Activated CD4-positive, alpha-beta T cell treated with anti-CD3 and anti-CD28 coated beads for 36 hours (primary cell): ENCODE measurements at regions of chr11 and their contacts with region 1.

Region 1: DNA sequence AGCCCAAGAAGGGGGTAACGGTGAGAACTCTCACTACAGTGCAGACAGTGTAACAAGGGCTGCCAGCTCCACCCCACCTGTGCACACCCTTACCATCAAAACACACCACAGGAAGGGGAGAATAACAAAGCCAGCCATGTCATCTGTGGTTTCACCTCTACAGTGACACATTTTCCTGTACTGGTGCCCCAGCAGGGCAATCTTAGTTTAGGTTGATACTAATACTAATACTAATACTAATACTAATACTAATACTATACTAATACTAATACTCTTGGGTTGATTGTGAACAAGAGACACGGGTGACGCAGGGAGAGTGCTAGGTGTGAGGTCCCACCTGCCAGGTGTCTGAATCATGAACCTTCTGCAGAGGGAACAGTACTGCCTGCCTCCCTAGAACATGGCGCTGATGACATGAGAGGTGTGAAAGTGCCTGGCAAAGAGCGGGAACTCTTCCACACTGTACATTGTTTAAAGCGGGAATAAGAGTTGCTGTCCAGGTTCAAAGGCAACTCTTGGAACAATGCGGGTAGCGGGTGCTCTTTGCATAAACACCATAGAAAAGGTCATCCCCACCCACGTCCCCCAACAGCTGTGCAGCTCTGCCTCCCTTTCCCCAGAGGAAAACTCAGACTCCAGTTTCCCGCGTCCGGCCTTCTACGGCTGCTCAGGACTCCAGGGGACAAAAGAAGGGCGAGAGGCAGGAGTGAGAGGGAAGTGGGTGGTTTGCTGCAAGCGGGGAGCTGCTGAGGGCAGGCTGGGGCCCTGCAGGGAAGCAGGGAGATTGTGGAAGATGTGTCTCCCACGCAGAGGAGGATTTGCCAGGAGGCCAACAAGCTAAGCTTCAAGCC is 25.0 kb upstream of the TMPRSS4 start:
- DNase-seq: peak; percentile 77
- ATAC-seq: peak; percentile 82
- H3K4me3 Mint-ChIP-seq: peak overlapping the region; percentile 46
- H3K27ac Mint-ChIP-seq: peak overlapping the region; percentile 89
- H3K4me1 Mint-ChIP-seq: peaks cover 60% of the 10 kb centered on the region
- H3K27me3 Mint-ChIP-seq: peaks cover under 1% of the 10 kb centered on the region

Region 2: GRCh38 chr11:117426269-117426685 is 625.6 kb before region 1 on chr11:
- CTCF ChIA-PET with region 1: interaction called, 5 read pairs
- POLR2A ChIA-PET with region 1: no interaction called
- intact Hi-C with region 1: loop called in 1 of 2 experiments (anchors 5 kb)
- DNase-seq: peak; percentile 86
- ATAC-seq: peak; percentile 78
- H3K4me3 Mint-ChIP-seq: no peak overlapping the region
- H3K27ac Mint-ChIP-seq: no peak overlapping the region
- H3K4me1 Mint-ChIP-seq: peaks cover 7% of the 10 kb centered on the region
- H3K27me3 Mint-ChIP-seq: no peaks in the 10 kb centered on the region

Region 3: GRCh38 chr11:117817368-117818040 is 234.3 kb before region 1 on chr11:
- CTCF ChIA-PET with region 1: interaction called, 48 read pairs
- POLR2A ChIA-PET with region 1: interaction called, 3 read pairs
- intact Hi-C with region 1: loop called (anchors 1 to 2 kb)
- DNase-seq: peak; percentile 95
- ATAC-seq: peak; percentile 45
- H3K4me3 Mint-ChIP-seq: peak overlapping the region; percentile 49
- H3K27ac Mint-ChIP-seq: peak overlapping the region; percentile 99
- H3K4me1 Mint-ChIP-seq: peaks cover 59% of the 10 kb centered on the region
- H3K27me3 Mint-ChIP-seq: no peaks in the 10 kb centered on the region

Region 4: DNA sequence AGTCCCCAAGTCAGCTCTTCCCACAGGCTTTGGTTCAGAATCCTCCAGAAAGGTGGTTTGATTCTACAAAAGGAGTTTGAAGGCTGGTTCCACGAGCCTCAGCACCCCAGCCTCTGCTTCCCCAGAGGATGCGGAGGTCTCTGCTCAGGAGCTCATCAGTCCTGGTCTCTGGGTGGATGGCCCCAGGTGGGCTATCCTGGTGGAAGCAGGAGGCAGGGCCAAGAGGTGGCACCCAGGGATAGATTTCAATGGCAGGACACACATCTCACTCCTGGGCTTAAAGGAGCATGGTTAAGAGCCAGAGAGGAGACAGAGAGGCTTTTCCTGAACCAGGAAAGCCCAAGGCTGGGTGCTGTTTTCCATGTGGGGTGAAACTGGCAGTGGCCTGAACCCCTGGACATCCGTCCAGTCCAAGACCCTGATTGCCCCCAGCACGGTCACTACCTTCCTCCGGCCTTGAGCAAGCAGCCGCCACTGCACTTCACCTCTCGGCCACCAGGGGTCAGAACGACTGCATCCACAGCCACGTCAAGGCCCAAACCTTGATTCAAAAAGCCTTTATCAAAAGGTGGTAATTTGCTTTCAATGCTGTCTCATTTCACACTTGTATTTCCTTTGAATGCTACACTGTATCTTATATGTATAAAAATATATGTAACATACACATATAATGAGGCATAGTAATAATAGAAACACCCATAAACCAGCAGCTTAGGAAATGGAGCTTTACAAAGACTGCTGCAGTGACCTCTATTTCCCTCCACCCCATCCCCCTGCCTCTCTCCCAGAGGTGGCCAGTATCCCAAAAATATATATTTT is 208.0 kb before region 1 on chr11:
- CTCF ChIA-PET with region 1: interaction called, 94 read pairs
- POLR2A ChIA-PET with region 1: no interaction called
- intact Hi-C with region 1: loop called (anchors 1 kb)
- DNase-seq: peak; percentile 91
- ATAC-seq: peak; percentile 89
- H3K4me3 Mint-ChIP-seq: no peak overlapping the region
- H3K27ac Mint-ChIP-seq: no peak overlapping the region
- H3K4me1 Mint-ChIP-seq: no peaks in the 10 kb centered on the region
- H3K27me3 Mint-ChIP-seq: no peaks in the 10 kb centered on the region

Region 5: DNA sequence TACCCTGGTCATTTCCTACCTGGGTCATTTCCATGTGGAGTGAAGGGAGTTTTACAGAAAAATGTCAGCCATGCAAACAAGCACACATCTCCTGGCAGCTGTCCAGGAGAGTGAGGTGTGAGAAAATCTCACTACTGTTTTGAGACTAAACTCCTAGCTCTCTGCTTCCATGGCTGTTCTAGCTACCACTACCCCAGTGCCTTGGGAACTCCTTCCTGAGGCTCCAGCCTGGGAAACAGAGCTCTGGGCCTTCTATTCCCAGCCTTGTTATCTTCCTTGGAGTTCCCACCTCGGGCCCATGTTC is 119.8 kb before region 1 on chr11:
- CTCF ChIA-PET with region 1: interaction called, 9 read pairs
- POLR2A ChIA-PET with region 1: no interaction called
- intact Hi-C with region 1: loop called in 1 of 2 experiments (anchors 5 kb)
- DNase-seq: peak; percentile 85
- ATAC-seq: peak; percentile 70
- H3K4me3 Mint-ChIP-seq: no peak overlapping the region
- H3K27ac Mint-ChIP-seq: peak overlapping the region; percentile 93
- H3K4me1 Mint-ChIP-seq: peaks cover 62% of the 10 kb centered on the region
- H3K27me3 Mint-ChIP-seq: no peaks in the 10 kb centered on the region

Region 6: DNA sequence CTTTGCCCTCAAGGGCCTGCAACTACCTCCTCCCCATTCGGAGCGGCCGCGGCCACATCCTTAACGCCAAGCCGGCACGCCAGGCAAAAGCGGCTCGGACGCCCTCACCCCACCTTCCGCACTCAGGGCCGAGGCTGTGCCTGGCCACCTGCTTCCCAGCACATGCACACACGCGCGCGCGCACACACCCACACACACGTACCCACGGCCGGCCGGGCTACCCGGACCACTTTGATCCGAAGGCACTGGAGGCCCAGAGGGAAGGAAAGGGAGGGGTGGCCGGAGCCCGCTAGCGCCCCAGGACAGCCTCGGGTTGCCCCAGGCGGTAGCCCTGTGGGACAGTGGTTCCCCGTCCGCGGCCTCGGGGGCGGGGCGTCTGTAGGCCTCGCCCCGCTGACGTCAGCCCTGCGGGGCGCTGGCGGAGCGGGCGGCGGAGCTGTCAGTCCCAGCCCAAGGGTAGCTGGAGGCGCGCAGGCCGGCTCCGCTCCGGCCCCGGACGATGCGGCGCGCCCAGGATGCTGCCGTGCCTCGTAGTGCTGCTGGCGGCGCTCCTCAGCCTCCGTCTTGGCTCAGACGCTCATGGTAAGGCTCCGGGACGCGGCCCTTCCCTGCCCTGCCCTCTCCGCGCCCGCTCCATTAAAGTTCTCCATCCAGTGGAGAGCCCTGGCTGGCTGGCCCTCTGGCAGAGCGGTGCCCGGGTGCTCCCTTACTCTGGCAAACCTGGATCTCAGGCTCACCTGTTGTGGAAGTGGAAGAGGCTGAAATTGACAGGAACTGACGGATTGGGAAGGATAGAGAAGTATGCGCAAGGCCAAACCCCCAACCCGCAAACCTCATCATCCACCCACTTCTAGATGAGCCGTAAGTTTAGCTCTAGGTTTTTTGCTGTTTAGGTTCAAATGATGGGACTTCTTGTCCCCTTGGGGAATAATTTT is 65.6 kb before region 1 on chr11 and contains the start of gene IL10RA:
- CTCF ChIA-PET with region 1: interaction called, 43 read pairs
- POLR2A ChIA-PET with region 1: interaction called, 23 read pairs
- intact Hi-C with region 1: loop called (anchors 1 kb)
- DNase-seq: peak; percentile 90
- ATAC-seq: peak; percentile 80
- H3K4me3 Mint-ChIP-seq: peak within 1 kb of the TSS; percentile 96
- H3K27ac Mint-ChIP-seq: peak within 1 kb of the TSS; percentile 96
- H3K4me1 Mint-ChIP-seq: peaks cover 76% of the 10 kb centered on the region
- H3K27me3 Mint-ChIP-seq: no peaks in the 10 kb centered on the region
- total RNA-seq, gene IL10RA: 57.1 to 79.4 TPM

Region 7: GRCh38 chr11:118171269-118172062 is 119.6 kb after region 1 on chr11:
- CTCF ChIA-PET with region 1: interaction called, 15 read pairs
- POLR2A ChIA-PET with region 1: no interaction called
- intact Hi-C with region 1: no loop called
- DNase-seq: peak; percentile 91
- ATAC-seq: peak; percentile 95
- H3K4me3 Mint-ChIP-seq: no peak overlapping the region
- H3K27ac Mint-ChIP-seq: no peak overlapping the region
- H3K4me1 Mint-ChIP-seq: no peaks in the 10 kb centered on the region
- H3K27me3 Mint-ChIP-seq: peaks cover 6% of the 10 kb centered on the region